A673 (cell line): ENCODE measurements at regions of chr9 and their contacts with region 1.

Region 1: GRCh38 chr9:21465859-21466518 is 16.1 kb downstream of the IFNE start:
- DNase-seq: peak; percentile 35
- H3K4me3 ChIP-seq: no peak overlapping the region
- H3K27ac ChIP-seq: no peak overlapping the region
- H3K4me1 ChIP-seq: no peaks in the 10 kb centered on the region
- H3K27me3 ChIP-seq: peaks cover 4% of the 10 kb centered on the region
- CTCF ChIP-seq: peak; percentile 59

Region 2: GRCh38 chr9:20823051-20823450 is 642.9 kb before region 1 on chr9:
- CTCF ChIA-PET with region 1: no interaction called
- POLR2A ChIA-PET with region 1: no interaction called
- intact Hi-C with region 1: no loop called
- DNase-seq: no peak
- H3K4me3 ChIP-seq: no peak overlapping the region
- H3K27ac ChIP-seq: no peak overlapping the region
- H3K4me1 ChIP-seq: no peaks in the 10 kb centered on the region
- H3K27me3 ChIP-seq: no peaks in the 10 kb centered on the region
- CTCF ChIP-seq: no peak

Region 3: GRCh38 chr9:21709464-21710058 is 243.6 kb after region 1 on chr9:
- CTCF ChIA-PET with region 1: no interaction called
- POLR2A ChIA-PET with region 1: no interaction called
- intact Hi-C with region 1: loop called (anchors 10 kb)
- DNase-seq: peak; percentile 57
- H3K4me3 ChIP-seq: no peak overlapping the region
- H3K27ac ChIP-seq: no peak overlapping the region
- H3K4me1 ChIP-seq: no peaks in the 10 kb centered on the region
- H3K27me3 ChIP-seq: no peaks in the 10 kb centered on the region
- CTCF ChIP-seq: peak; percentile 69

Region 4: DNA sequence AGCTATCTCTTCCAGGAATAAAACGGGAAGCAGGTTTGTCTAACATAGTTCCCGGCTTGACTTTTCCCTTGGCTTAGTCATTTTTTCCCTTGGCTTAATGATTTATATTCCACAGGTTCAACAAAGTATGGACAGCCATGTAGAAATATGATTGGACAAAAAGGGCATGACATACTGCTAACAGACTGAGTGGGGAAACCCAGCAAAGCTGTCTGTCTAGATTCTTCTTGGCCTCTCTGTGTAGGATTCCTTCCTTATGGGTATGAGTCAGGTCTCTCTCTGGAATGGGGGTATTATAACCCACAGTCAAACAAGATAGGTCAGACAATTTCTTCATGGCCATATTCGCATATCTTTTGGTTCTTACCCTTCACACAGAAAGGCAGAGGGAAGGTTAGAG is 330.8 kb after region 1 on chr9:
- CTCF ChIA-PET with region 1: no interaction called
- POLR2A ChIA-PET with region 1: no interaction called
- intact Hi-C with region 1: no loop called
- DNase-seq: no peak
- H3K4me3 ChIP-seq: no peak overlapping the region
- H3K27ac ChIP-seq: no peak overlapping the region
- H3K4me1 ChIP-seq: no peaks in the 10 kb centered on the region
- H3K27me3 ChIP-seq: peaks cover 40% of the 10 kb centered on the region
- CTCF ChIP-seq: no peak